ENCODE measurements at regions of chr1 and their contacts with region 1.

Region 1: DNA sequence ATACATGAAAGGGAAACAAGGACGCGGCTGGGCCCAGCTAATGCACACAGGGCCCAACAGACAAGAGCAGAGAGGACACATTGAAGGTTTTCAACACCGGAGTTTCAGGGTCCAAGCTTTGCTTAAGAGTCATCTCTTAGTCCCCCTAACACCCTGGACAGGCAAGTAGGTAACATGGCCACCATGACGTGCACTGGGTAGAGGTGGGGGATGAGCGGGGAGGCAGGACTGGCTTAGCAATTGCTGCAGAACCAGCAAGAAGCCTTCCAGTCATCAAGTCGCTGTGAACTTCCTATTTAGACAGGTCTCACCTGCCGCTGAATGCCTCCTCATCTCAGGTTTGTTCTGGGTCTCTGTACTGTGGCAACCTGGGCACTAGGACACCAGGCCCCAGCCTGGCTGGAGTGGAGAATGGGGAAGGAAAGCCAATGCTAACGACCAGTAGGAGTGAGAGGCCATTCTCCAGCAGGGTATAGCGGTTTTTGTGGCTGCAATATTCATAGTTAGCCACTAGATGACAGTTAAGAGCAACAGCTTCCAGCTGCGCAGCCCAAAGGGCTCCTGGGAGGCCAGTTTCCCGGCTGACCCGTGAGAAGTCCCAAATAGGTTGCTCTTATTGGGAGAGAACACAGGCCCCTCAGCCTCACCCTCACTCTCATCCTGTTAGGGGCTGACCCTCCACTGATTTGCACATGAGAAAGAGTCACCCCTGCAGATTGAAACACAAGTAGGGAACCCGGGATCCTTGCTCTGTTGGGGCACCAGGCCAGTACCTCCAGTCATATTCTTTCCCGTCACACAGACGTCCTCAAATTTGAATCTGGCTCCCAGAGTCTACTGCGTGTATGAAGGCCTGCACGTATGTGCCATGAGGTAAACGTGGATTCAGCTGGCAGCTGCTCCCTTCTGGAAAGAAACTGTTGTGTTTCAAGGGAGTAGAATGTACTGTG is 6.0 kb upstream of the PIGC start:
- DNase-seq: peak in 7 of 9 donors; percentile 22 to 42 (median 32)
- ATAC-seq: peak; percentile 90
- H3K4me3 ChIP-seq: no peak overlapping the region
- H3K4me3 Mint-ChIP-seq: peak overlapping the region in 4 of 10 donors; percentile 35 to 67 (median 56)
- H3K27ac ChIP-seq: no peak overlapping the region
- H3K27ac Mint-ChIP-seq: peak overlapping the region in 4 of 9 donors; percentile 45 to 90 (median 87)
- H3K4me1 ChIP-seq: no peaks in the 10 kb centered on the region
- H3K4me1 Mint-ChIP-seq: peaks cover 0 to 23% (median 18%) of the 10 kb centered on the region in 7 donors
- H3K27me3 ChIP-seq: no peaks in the 10 kb centered on the region
- H3K27me3 Mint-ChIP-seq: peaks cover 0 to 3% (median 0%) of the 10 kb centered on the region in 5 donors

Region 2: DNA sequence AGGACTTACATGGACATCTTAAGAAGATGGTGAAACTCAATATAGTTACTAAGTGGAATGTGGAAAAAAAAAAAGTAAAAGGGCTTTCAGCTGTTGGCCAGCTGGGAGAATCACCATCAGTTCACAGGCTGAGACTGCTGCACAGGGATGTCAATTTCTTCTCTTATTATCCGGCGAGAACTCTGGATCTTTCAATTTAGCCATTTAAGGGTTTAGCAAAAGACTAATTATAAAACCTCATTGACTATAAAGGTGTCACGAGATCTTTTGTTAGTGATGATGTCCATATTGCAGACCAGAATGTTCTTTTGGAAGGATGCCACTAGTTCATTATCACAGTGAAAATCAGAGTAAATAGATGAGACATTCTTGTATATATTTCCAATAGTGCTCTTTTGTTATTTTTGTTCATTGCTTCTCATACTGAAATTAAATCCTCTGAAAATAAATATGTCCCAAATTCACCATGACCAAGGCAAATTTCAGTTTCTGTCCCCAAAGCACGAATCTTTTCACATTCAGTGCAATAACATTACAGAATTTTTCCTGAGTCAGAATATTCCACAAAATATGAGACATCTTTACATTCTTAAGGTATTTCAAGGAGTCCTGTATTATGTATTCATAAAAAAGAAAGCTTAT is 342.4 kb before region 1 on chr1:
- CTCF ChIA-PET with region 1: no interaction called
- POLR2A ChIA-PET with region 1: no interaction called
- intact Hi-C with region 1: no loop called
- DNase-seq: no peak
- ATAC-seq: no peak
- H3K4me3 ChIP-seq: no peak overlapping the region
- H3K4me3 Mint-ChIP-seq: no peak overlapping the region
- H3K27ac ChIP-seq: no peak overlapping the region
- H3K27ac Mint-ChIP-seq: no peak overlapping the region
- H3K4me1 ChIP-seq: no peaks in the 10 kb centered on the region
- H3K4me1 Mint-ChIP-seq: peaks cover 0 to 5% (median 0%) of the 10 kb centered on the region in 7 donors
- H3K27me3 ChIP-seq: no peaks in the 10 kb centered on the region
- H3K27me3 Mint-ChIP-seq: peaks cover 0 to 20% (median 4%) of the 10 kb centered on the region in 5 donors

Region 3: DNA sequence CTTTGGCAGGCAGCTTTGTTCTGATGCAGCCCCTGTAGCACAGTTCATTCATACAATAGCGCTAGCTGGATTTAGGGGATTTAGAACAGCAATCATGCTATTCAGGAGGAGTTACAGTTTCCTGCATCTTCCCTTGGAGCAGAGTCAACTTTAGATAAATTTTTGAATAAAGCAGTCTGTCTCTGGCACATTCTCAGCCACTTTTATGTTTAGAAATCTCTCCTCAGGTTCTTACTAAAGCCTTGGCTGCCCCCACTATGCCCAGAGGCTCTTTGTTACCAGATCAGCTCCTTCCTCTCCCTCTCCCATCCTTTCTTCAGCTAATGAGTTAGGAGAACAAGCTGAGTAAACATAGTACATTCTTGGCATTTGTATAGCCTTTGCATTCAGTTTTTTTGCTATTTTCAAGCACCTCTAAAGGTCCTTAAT is 11.0 kb after region 1 on chr1:
- CTCF ChIA-PET with region 1: interaction called, 6 read pairs
- POLR2A ChIA-PET with region 1: interaction called, 3 read pairs
- intact Hi-C with region 1: loop called in 1 of 2 experiments (anchors 1 kb)
- DNase-seq: no peak
- ATAC-seq: no peak
- H3K4me3 ChIP-seq: no peak overlapping the region
- H3K4me3 Mint-ChIP-seq: no peak overlapping the region
- H3K27ac ChIP-seq: no peak overlapping the region
- H3K27ac Mint-ChIP-seq: peak overlapping the region in 1 of 9 donors; percentile 43
- H3K4me1 ChIP-seq: no peaks in the 10 kb centered on the region
- H3K4me1 Mint-ChIP-seq: no peaks in the 10 kb centered on the region
- H3K27me3 ChIP-seq: no peaks in the 10 kb centered on the region
- H3K27me3 Mint-ChIP-seq: peaks cover 5 to 38% (median 5%) of the 10 kb centered on the region in 5 donors

Region 4: GRCh38 chr1:172487550-172487949 is 37.7 kb after region 1 on chr1:
- CTCF ChIA-PET with region 1: no interaction called
- POLR2A ChIA-PET with region 1: no interaction called
- intact Hi-C with region 1: loop called in 1 of 2 experiments (anchors 2 kb)
- DNase-seq: peak in 1 of 9 donors; percentile 12
- ATAC-seq: no peak
- H3K4me3 ChIP-seq: no peak overlapping the region
- H3K4me3 Mint-ChIP-seq: peak overlapping the region in 5 of 10 donors; percentile 8 to 59 (median 41)
- H3K27ac ChIP-seq: no peak overlapping the region
- H3K27ac Mint-ChIP-seq: no peak overlapping the region
- H3K4me1 ChIP-seq: peaks cover 0 to 12% of the 10 kb centered on the region in 2 donors
- H3K4me1 Mint-ChIP-seq: peaks cover 9 to 26% (median 19%) of the 10 kb centered on the region in 7 donors
- H3K27me3 ChIP-seq: no peaks in the 10 kb centered on the region
- H3K27me3 Mint-ChIP-seq: peaks cover 4 to 35% (median 9%) of the 10 kb centered on the region in 5 donors

Region 5: GRCh38 chr1:172582893-172583292 is 133.0 kb after region 1 on chr1:
- CTCF ChIA-PET with region 1: no interaction called
- POLR2A ChIA-PET with region 1: no interaction called
- intact Hi-C with region 1: loop called in 1 of 2 experiments (anchors 2 kb)
- DNase-seq: no peak
- ATAC-seq: no peak
- H3K4me3 ChIP-seq: no peak overlapping the region
- H3K4me3 Mint-ChIP-seq: no peak overlapping the region
- H3K27ac ChIP-seq: no peak overlapping the region
- H3K27ac Mint-ChIP-seq: peak overlapping the region in 2 of 9 donors; percentile 38 to 43
- H3K4me1 ChIP-seq: no peaks in the 10 kb centered on the region
- H3K4me1 Mint-ChIP-seq: peaks cover 0 to 22% (median 6%) of the 10 kb centered on the region in 7 donors
- H3K27me3 ChIP-seq: no peaks in the 10 kb centered on the region
- H3K27me3 Mint-ChIP-seq: no peaks in the 10 kb centered on the region

Region 6: GRCh38 chr1:172727956-172728603 is 278.2 kb after region 1 on chr1:
- CTCF ChIA-PET with region 1: no interaction called
- POLR2A ChIA-PET with region 1: no interaction called
- intact Hi-C with region 1: loop called (anchors 1 to 2 kb)
- DNase-seq: peak in 6 of 9 donors; percentile 23 to 42 (median 38)
- ATAC-seq: peak; percentile 88
- H3K4me3 ChIP-seq: no peak overlapping the region
- H3K4me3 Mint-ChIP-seq: no peak overlapping the region
- H3K27ac ChIP-seq: no peak overlapping the region
- H3K27ac Mint-ChIP-seq: peak overlapping the region in 1 of 9 donors; percentile 1
- H3K4me1 ChIP-seq: peaks cover 0 to 6% of the 10 kb centered on the region in 2 donors
- H3K4me1 Mint-ChIP-seq: peaks cover 7 to 25% (median 15%) of the 10 kb centered on the region in 7 donors
- H3K27me3 ChIP-seq: no peaks in the 10 kb centered on the region
- H3K27me3 Mint-ChIP-seq: peaks cover 0 to 42% (median 0%) of the 10 kb centered on the region in 5 donors